ENCODE measurements at regions of chr5 and their contacts with region 1.

Region 1: DNA sequence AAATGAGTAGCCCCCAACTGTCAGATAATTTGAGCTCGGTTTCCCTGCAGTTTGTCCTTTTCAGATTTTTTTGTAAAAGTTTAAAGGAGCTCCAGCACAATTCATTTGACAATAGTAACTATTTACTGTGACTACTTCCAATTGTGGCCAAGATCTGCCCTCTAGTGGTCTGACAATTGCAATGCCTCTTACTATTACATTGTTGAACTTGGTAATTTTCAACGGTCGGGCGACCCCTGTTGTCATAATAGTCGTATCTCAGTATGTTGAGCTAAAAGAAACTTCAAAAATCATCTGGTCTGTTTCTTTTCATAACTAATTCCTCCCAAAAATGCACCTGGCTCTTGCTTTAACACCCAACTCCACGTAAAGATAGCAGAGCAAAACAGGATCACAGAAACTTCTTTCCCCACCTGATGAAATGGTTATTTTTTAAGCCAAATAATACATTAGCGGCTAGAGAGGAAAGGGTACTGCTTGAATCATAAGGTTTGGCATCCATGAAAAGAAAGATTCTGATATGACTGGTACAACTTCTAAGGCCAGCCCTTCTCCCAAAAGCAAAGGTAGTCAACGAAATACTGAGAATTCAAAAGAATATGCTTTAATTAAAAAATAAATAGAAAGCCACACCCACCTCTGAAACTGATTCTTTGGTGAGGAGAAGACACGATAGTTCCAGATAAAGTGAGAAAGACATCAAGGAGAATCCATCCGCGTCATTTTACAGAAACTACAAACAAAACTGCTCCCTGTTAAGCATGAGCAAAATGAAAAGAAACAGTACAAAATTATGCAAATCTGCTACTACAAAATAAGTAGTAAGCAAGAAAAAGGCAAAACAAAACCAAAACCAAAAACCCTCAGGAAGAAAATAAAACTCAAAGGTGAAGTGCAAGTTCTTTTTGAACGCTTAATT is 76.9 kb upstream of the HTR4 start:
- DNase-seq: peak; percentile 79
- H3K4me3 ChIP-seq: no peak overlapping the region
- H3K27ac ChIP-seq: peak overlapping the region in 1 of 4 donors; percentile 31
- H3K4me1 ChIP-seq: peaks cover 0 to 9% (median 2%) of the 10 kb centered on the region in 4 donors
- H3K27me3 ChIP-seq: no peaks in the 10 kb centered on the region
- CTCF ChIP-seq: peak; percentile 89 to 97 (median 91)
- EP300 ChIP-seq: no peak
- POLR2A ChIP-seq: no peak

Region 2: DNA sequence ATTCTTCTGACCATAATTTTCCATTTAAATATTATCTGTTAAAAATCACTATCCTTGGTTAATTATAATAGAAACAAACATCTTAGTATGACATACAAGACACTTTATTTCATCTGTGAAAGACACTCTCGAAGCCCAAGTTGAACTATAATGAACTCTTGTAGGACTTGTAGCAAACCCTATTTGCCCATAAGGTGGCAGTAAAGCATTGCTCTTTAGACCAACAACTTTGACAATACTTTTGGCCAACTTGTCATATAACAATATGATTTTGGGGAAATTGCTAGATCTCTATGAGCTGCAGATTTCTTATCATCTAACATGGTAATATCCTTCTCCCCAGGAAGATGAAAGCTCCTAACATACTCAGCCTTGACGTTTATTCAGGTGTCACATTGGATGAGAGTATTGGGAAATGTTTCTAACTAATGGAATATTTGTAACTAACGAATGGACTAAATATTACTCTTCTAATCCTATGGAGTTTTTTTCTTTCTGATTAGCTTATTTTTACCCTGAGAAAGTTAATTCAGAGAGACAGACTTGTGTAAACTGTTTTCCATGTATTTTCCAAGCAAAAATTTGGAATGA is 551.9 kb before region 1 on chr5:
- in situ Hi-C with region 1: loop called in 3 of 4 experiments (anchors 10 to 25 kb)
- intact Hi-C with region 1: loop called (anchors 10 kb)
- DNase-seq: no peak
- H3K4me3 ChIP-seq: no peak overlapping the region
- H3K27ac ChIP-seq: no peak overlapping the region
- H3K4me1 ChIP-seq: no peaks in the 10 kb centered on the region
- H3K27me3 ChIP-seq: no peaks in the 10 kb centered on the region
- CTCF ChIP-seq: peak; percentile 57 to 72 (median 63)
- EP300 ChIP-seq: no peak
- POLR2A ChIP-seq: no peak

Region 3: GRCh38 chr5:148443998-148444397 is 287.2 kb before region 1 on chr5:
- in situ Hi-C with region 1: loop called (anchors 5 to 10 kb)
- intact Hi-C with region 1: loop called (anchors 2 kb)
- DNase-seq: peak; percentile 25
- H3K4me3 ChIP-seq: no peak overlapping the region
- H3K27ac ChIP-seq: no peak overlapping the region
- H3K4me1 ChIP-seq: peaks cover 3 to 26% (median 7%) of the 10 kb centered on the region in 4 donors
- H3K27me3 ChIP-seq: no peaks in the 10 kb centered on the region
- CTCF ChIP-seq: peak; percentile 68 to 81 (median 74)
- EP300 ChIP-seq: no peak
- POLR2A ChIP-seq: no peak

Region 4: DNA sequence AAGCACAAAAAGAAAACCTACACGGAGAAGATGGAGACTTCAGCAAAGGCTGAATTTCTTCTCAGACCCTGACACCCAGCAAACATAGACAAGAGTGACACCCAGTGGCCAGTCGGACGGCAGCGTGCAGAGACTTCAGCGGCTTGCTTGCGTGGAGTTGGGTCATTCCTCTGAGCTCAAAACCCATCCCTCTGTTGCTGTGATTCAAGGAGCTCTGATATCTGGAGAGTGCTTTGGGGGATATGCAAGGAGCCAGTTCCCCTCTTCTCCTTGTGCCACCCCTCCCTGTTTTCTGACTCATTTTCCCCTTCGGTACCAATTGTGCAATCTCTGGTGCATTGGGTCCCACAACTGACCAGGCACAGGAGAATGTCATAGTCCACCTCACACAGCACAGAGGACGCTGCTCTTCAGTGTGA is 304.2 kb after region 1 on chr5:
- in situ Hi-C with region 1: loop called (anchors 5 to 25 kb)
- intact Hi-C with region 1: loop called (anchors 1 kb)
- DNase-seq: peak; percentile 76
- H3K4me3 ChIP-seq: no peak overlapping the region
- H3K27ac ChIP-seq: no peak overlapping the region
- H3K4me1 ChIP-seq: no peaks in the 10 kb centered on the region
- H3K27me3 ChIP-seq: no peaks in the 10 kb centered on the region
- CTCF ChIP-seq: peak; percentile 76 to 79 (median 78)
- EP300 ChIP-seq: no peak
- POLR2A ChIP-seq: no peak

Region 5: GRCh38 chr5:149128023-149128875 is 397.0 kb after region 1 on chr5:
- in situ Hi-C with region 1: loop called in 1 of 4 experiments (anchors 25 kb)
- intact Hi-C with region 1: loop called (anchors 10 kb)
- DNase-seq: peak; percentile 20
- H3K4me3 ChIP-seq: no peak overlapping the region
- H3K27ac ChIP-seq: no peak overlapping the region
- H3K4me1 ChIP-seq: no peaks in the 10 kb centered on the region
- H3K27me3 ChIP-seq: no peaks in the 10 kb centered on the region
- CTCF ChIP-seq: peak; percentile 39 to 56 (median 40)
- EP300 ChIP-seq: no peak
- POLR2A ChIP-seq: no peak

Measured in transverse colon (tissue), 4 donors.